ENCODE measurements at regions of chr5 and their contacts with region 1.

Region 1: DNA sequence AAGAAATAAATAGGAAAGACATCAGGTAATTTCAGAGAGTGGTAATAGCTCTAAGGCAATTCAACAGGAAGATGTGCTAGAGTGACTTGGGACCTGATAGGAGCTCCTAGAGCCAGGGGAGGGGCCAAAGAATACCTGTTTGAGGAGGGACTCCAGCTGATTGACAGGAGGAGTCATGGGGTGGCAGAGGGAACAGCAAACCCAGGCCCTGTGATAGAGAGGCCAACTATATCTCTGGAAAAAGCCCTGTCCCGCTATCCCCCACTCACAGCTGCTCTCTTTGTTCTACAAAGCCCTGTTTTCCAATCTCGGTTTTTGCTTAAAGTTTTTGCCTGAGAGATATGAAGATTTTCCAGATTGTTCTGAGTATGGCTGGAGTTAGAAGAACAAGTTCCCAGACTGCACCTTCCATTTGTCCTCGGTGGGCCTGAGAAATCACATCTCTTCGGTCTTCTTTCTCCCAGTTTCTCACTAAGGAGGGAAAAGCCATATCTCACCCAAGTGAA is 9.0 kb upstream of the NSD1 start:
- DNase-seq: no peak
- H3K4me3 ChIP-seq: no peak overlapping the region
- H3K27ac ChIP-seq: no peak overlapping the region
- H3K4me1 ChIP-seq: no peaks in the 10 kb centered on the region
- H3K27me3 ChIP-seq: no peaks in the 10 kb centered on the region
- CTCF ChIP-seq: no peak
- EP300 ChIP-seq: no peak
- POLR2A ChIP-seq: no peak

Region 2: DNA sequence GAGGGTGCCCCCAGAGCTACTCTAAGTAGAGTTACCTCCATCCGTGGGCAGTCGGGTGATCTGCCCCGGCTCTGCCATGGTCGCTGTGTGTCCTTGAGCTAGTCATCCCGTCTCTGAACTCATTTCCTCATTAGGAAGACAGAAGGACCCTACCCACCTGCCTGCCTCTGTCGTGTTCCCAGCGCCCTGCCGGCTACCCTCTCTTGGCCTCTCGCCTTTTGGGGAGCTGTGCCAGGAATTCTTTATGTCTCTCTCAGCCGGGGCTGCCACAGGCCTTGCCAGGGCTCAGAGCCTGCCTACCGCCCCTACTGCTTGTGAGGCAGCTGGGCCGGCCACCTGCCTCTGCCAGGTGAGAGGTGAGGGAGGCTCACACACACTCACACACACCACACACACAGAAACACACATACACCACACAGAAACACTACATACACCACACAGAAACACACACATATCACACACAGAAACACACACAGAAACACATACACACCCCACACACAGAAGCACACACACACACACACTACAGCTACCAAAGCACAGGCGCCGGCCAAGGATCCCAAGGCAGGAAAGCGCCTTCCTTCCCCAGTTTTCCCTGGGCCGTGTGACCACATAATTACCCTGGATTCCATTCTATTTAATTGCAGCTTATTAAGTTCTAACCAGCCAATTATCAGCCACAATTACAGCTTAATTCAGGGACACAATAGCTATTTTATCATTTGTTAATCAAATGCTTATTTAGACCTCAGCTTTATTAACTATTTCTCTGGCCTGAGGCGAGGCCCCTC is 272.5 kb before region 1 on chr5:
- intact Hi-C with region 1: no loop called
- DNase-seq: no peak
- H3K4me3 ChIP-seq: no peak overlapping the region
- H3K27ac ChIP-seq: no peak overlapping the region
- H3K4me1 ChIP-seq: no peaks in the 10 kb centered on the region
- H3K27me3 ChIP-seq: peaks cover 0 to 97% (median 35%) of the 10 kb centered on the region in 3 donors
- CTCF ChIP-seq: no peak
- EP300 ChIP-seq: no peak
- POLR2A ChIP-seq: no peak

Region 3: DNA sequence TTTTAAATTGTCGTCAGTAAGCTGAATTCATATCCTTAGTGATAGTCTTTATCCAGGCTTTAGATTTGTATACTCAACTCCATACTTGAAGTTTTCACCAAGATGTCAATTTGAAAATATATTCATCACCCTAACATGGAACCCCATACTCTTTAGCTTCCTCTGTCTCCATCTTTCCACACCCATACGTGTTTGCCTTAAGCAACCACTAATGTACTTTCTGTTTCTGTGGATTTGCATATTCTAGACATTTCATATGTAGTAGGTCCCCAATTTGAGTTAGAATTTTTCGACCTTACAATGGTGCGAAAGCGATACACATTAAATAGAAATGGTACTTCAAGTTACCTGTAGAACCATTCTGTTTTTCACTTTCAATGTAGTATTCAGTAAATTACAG is 74.2 kb after region 1 on chr5:
- intact Hi-C with region 1: no loop called
- DNase-seq: no peak
- H3K4me3 ChIP-seq: no peak overlapping the region
- H3K27ac ChIP-seq: no peak overlapping the region
- H3K4me1 ChIP-seq: peaks cover 0 to 4% (median 2%) of the 10 kb centered on the region in 4 donors
- H3K27me3 ChIP-seq: no peaks in the 10 kb centered on the region
- CTCF ChIP-seq: no peak
- EP300 ChIP-seq: no peak
- POLR2A ChIP-seq: no peak

Region 4: GRCh38 chr5:177296581-177296980 is 172.0 kb after region 1 on chr5:
- intact Hi-C with region 1: loop called (anchors 10 kb)
- DNase-seq: no peak
- H3K4me3 ChIP-seq: no peak overlapping the region
- H3K27ac ChIP-seq: peak overlapping the region in 2 of 5 donors; percentile 47 to 51
- H3K4me1 ChIP-seq: peaks cover 30 to 55% (median 34%) of the 10 kb centered on the region in 4 donors
- H3K27me3 ChIP-seq: no peaks in the 10 kb centered on the region
- CTCF ChIP-seq: no peak
- EP300 ChIP-seq: no peak
- POLR2A ChIP-seq: no peak

Measured in stomach (tissue), 19 donors.